Mammary epithelial cell (primary cell): ENCODE measurements at regions of chr11 and their contacts with region 1.

Region 1: DNA sequence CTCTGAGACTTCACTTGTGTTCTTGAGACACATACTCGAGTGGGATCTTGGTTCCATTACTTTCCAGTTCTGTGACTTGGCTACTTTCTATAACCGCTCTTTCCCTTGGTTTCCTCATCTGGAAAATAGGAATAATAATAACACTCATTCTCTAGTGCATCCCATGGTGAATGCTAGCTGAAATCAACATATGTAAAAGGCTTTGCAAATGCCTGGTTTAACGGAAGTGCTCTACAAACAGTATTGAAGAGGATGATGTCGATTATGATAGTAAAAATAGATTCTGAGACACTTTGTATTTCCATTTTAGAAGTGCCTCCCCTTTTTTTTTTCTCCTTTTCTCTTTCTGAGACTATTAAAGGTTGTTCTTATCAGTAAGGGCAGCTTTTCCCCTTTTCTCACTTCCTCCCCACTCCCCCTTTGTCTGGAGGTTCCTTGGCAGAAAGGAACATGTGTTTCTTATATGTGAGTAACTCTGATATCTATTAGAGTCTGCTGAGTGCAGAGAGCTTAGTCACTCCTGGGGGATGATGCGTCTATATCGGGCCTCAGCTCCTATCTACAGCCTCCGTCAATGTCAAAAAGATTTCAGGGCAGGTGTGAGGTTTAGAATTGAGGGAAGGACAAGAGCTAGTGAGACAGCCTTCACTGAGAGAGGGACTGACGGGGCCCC is 489.3 kb downstream of the NTM start:
- DNase-seq: no peak
- H3K4me3 ChIP-seq: no peak overlapping the region
- H3K27ac ChIP-seq: no peak overlapping the region
- H3K4me1 ChIP-seq: no peaks in the 10 kb centered on the region
- H3K27me3 ChIP-seq: no peaks in the 10 kb centered on the region
- CTCF ChIP-seq: no peak

Region 2: GRCh38 chr11:131815590-131815989 is 44.1 kb before region 1 on chr11:
- CTCF ChIA-PET with region 1: no interaction called
- dilution Hi-C with region 1: loop called (anchors 5 kb)
- in situ Hi-C with region 1: no loop called
- intact Hi-C with region 1: no loop called
- DNase-seq: no peak
- H3K4me3 ChIP-seq: no peak overlapping the region
- H3K27ac ChIP-seq: no peak overlapping the region
- H3K4me1 ChIP-seq: peaks cover 12% of the 10 kb centered on the region
- H3K27me3 ChIP-seq: peaks cover 2% of the 10 kb centered on the region
- CTCF ChIP-seq: no peak

Region 3: DNA sequence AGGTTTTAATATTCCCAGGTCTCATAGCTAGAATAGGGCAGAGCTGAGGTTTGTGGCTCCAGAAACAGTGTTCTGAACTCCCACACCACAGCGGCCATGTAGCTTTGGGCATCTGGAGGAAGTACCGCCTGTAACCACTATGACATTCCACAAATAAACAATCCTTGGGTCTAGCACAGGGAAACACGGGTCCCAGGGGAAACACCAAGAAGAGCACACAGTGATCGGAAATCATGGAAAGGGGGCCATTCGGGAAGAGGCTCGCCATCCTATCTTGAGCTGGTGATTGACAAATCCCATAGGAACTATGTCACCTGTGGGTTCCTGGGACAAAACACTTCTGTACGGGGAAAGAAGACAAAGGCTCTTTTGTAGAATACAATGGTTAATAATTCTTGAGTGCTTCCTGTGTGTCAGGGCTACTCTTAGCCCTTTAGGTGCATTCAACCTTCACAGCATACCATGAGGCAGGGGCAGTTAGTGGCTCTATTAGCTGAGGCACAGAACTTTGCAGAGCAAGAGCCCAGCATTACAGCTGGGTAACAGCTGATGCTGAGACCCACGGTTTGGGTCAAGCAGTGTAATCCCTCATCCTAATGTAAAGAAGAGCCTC is 24.9 kb after region 1 on chr11:
- CTCF ChIA-PET with region 1: no interaction called
- dilution Hi-C with region 1: no loop called
- in situ Hi-C with region 1: no loop called
- intact Hi-C with region 1: no loop called
- DNase-seq: no peak
- H3K4me3 ChIP-seq: no peak overlapping the region
- H3K27ac ChIP-seq: no peak overlapping the region
- H3K4me1 ChIP-seq: peaks cover 36% of the 10 kb centered on the region
- H3K27me3 ChIP-seq: no peaks in the 10 kb centered on the region
- CTCF ChIP-seq: peak in 1 of 2 donors; percentile 8

Region 4: DNA sequence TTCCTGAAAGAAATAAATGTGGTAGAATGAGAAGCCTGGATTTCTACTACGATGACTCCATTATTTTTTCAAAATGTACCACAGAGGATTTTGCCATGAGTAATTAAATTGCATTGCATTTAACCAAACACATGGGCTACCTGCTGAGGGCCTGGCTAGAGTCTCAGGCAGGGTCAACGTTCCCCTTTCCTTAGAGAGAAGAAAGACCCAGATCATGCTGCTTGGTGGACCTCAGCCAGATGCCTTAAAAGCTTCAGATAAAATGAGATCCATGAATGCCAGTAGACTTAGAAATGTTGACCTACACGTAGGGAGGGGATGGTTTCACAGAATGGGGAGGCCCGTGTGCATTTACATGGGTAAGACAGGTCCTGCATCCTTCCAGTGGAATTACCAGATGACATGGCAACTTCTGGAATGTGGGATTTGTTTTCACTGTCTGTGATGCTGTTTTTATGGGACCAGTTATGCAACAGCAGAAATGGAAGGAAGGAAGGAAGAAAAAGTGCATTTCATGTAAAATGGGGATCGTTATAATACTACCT is 580.1 kb after region 1 on chr11:
- CTCF ChIA-PET with region 1: no interaction called
- dilution Hi-C with region 1: no loop called
- in situ Hi-C with region 1: no loop called
- intact Hi-C with region 1: no loop called
- DNase-seq: no peak
- H3K4me3 ChIP-seq: no peak overlapping the region
- H3K27ac ChIP-seq: no peak overlapping the region
- H3K4me1 ChIP-seq: no peaks in the 10 kb centered on the region
- H3K27me3 ChIP-seq: peaks cover 3% of the 10 kb centered on the region
- CTCF ChIP-seq: no peak